A673 (cell line): ENCODE measurements at regions of chr12 and their contacts with region 1.

Region 1: DNA sequence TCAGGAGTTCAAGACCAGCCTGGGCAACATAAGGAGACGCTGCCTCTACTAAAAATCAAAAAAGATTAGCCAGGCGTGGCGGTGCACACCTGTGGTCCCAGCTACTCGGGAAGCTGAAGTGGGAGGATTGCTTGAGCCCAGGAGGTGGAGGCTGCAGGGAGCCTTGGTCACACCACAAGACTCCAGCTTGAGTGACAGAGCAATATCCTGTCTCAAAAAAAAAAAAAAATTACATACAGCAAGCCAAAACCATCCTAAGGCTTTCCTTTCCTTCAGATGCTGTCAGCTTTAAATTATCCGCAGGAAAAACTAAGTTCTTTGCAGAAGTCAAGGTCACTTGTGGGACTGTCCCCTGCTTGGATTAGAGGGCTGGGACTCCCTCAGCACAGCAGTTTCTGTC is 1.3 kb downstream of the CS start:
- DNase-seq: no peak
- H3K4me3 ChIP-seq: peak overlapping the region; percentile 90
- H3K27ac ChIP-seq: peak overlapping the region; percentile 86
- H3K4me1 ChIP-seq: peaks cover 28% of the 10 kb centered on the region
- H3K27me3 ChIP-seq: no peaks in the 10 kb centered on the region
- CTCF ChIP-seq: no peak

Region 2: DNA sequence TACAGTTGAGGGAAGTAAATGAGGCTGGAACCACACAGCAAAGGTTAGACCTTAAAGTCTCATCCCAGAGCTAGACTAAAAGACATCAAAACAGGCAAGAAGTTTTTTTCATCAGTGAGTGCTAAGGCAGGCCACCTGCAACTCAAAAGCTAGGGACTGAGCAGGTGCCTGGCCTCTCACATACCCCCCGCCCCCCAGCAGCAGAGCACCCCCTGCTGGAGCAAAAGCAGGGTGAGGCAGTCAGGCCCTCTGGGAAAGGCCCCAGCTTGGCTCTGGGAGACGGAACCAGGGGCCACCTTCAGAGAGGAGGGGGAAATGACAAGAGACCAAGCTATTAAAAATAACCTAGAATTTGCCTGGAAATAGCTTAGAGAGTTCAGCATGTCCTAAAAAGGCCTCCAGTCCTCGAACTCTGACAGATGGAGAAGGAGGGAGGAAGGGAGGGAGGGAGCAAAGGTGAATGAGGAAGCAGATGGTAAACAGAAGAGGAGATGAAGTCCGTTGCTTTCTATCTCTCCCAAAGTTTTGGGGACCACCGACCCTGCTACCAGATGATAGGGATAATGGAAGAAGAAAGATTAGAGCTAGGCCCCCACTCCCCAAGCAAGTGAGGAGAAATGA is 592.9 kb before region 1 on chr12:
- CTCF ChIA-PET with region 1: no interaction called
- POLR2A ChIA-PET with region 1: interaction called, 11 read pairs
- intact Hi-C with region 1: no loop called
- DNase-seq: no peak
- H3K4me3 ChIP-seq: no peak overlapping the region
- H3K27ac ChIP-seq: no peak overlapping the region
- H3K4me1 ChIP-seq: peaks cover 14% of the 10 kb centered on the region
- H3K27me3 ChIP-seq: no peaks in the 10 kb centered on the region
- CTCF ChIP-seq: peak; percentile 51